Heart right ventricle (tissue), 16 donors: ENCODE measurements at regions of chr14 and their contacts with region 1.

Region 1: GRCh38 chr14:35687335-35687939 is 121.7 kb downstream of the RALGAPA1 start:
- DNase-seq: no peak
- ATAC-seq: peak in 1 of 8 donors; percentile 53
- H3K4me3 ChIP-seq: no peak overlapping the region
- H3K27ac ChIP-seq: no peak overlapping the region
- H3K4me1 ChIP-seq: no peaks in the 10 kb centered on the region
- H3K27me3 ChIP-seq: no peaks in the 10 kb centered on the region
- CTCF ChIP-seq: peak; percentile 53 to 82 (median 71)

Region 2: GRCh38 chr14:35632676-35633075 is 54.8 kb before region 1 on chr14:
- intact Hi-C with region 1: no loop called
- DNase-seq: no peak
- ATAC-seq: no peak
- H3K4me3 ChIP-seq: no peak overlapping the region
- H3K27ac ChIP-seq: no peak overlapping the region
- H3K4me1 ChIP-seq: peaks cover 0 to 7% (median 0%) of the 10 kb centered on the region in 9 donors
- H3K27me3 ChIP-seq: no peaks in the 10 kb centered on the region
- CTCF ChIP-seq: no peak

Region 3: DNA sequence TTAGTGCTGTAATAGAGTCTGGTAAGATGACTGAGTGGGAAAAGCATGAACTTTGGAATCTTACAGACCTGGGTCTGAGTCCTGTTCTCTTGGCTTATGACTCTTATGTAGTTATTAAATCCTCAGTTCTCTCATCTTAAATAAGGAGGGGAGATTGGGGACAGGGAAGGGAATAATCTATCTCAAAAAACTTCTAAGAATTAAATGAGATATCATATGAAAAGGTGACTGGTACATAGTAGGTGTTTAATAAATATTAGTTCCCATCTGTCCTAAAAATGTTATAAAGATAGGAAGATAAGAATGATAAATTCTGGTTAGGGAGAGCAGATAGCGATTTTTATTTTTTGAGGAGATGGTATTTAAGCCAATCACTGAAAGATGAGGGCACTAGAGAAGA is 34.4 kb before region 1 on chr14:
- intact Hi-C with region 1: no loop called
- DNase-seq: no peak
- ATAC-seq: no peak
- H3K4me3 ChIP-seq: no peak overlapping the region
- H3K27ac ChIP-seq: no peak overlapping the region
- H3K4me1 ChIP-seq: no peaks in the 10 kb centered on the region
- H3K27me3 ChIP-seq: no peaks in the 10 kb centered on the region
- CTCF ChIP-seq: no peak

Region 4: DNA sequence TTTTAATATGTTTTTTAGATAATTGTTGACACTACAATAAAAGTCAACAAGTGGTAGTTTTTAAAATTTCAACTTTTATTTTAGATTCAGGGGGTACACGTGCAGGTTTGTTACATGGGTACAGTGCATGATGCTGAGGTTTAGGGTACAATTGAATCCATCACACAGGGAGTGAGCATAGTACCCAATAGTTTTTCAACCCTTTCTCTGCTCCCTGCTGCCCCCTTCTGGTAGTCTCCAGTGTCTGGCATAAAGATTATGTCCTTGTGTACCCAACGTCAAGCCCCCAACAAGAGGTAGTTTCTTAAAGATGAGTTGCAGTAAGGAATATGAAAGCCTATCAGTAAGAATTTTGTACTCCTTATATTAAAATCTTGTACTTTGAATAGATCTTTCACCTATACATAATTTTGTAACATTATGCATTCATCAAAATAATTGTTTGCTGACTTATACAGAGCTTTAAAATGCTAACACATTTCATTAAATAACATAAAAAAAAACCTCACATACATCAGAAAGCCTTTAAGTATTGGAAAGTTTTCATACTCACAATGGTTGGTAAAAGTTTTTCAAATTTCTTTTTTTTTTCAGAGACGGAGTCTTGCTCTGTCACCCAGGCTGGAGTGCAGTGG is 127.1 kb after region 1 on chr14:
- intact Hi-C with region 1: loop called in 1 of 10 experiments (anchors 10 kb)
- DNase-seq: peak; percentile 29 to 45
- ATAC-seq: peak in 1 of 8 donors; percentile 46
- H3K4me3 ChIP-seq: no peak overlapping the region
- H3K27ac ChIP-seq: no peak overlapping the region
- H3K4me1 ChIP-seq: no peaks in the 10 kb centered on the region
- H3K27me3 ChIP-seq: no peaks in the 10 kb centered on the region
- CTCF ChIP-seq: peak; percentile 44 to 78 (median 71)